Cardiac septum (tissue), 1 donor: ENCODE measurements at regions of chr4 and their contacts with region 1.

Region 1: GRCh38 chr4:150078637-150079581 is 664 bp downstream of the DCLK2 start:
- DNase-seq: peak; percentile 79

Region 2: GRCh38 chr4:149754526-149754925 is 324.4 kb before region 1 on chr4:
- intact Hi-C with region 1: no loop called
- DNase-seq: no peak

Region 3: DNA sequence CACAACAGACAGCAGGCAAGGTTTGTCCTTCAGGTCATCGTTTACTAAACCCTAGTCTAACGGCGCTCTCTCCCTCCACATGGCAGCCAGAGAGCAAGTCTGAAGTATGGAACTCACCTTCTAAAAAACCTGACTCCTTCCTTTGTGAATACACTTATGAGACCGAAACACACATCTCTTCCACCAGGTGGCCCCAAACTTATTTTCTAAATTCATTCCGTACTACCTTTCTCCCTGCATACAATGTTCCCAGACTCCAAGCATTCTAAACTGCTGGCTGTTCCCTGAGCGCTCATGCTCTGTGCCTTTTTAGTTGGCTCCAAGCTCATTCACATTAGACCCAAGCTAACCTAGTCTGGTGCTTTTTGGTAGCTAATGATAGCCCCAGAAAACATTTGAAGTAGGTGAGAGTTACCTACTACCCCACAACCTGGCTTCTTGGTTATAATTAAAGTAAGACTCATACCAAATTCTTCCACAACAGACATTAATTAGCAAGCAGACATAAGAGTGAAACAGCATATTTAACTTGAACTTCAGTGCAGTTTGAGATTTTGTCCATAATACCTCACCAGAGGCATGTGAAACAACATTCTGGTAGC is 68.3 kb before region 1 on chr4:
- intact Hi-C with region 1: loop called (anchors 5 kb)
- DNase-seq: no peak

Region 4: GRCh38 chr4:150119492-150119891 is 40.6 kb after region 1 on chr4:
- intact Hi-C with region 1: loop called (anchors 5 kb)
- DNase-seq: no peak

Region 5: DNA sequence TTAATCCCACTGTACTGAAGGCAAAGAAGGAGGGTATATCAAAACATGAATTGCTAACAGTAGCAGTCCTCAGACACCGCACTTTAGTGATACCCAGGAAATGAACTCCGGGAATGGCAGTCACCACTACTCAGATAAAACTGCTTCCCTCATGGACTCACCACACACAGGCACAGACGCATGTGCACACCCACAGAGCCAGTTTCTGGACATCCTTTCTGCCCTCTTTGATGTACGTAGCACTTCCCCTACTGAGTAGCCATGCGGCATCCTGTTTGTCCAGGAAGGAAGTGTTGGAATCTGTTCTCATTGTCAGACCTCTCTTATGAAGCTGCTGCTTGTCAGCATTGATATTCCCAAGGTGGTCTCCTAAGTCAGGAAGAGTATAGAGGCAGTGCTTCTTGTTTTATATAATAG is 95.1 kb after region 1 on chr4:
- intact Hi-C with region 1: loop called (anchors 5 kb)
- DNase-seq: no peak

Region 6: GRCh38 chr4:150209140-150209829 is 130.4 kb after region 1 on chr4:
- intact Hi-C with region 1: loop called (anchors 5 kb)
- DNase-seq: no peak

Region 7: GRCh38 chr4:150232029-150232428 is 153.1 kb after region 1 on chr4:
- intact Hi-C with region 1: loop called (anchors 5 kb)
- DNase-seq: no peak

Region 8: DNA sequence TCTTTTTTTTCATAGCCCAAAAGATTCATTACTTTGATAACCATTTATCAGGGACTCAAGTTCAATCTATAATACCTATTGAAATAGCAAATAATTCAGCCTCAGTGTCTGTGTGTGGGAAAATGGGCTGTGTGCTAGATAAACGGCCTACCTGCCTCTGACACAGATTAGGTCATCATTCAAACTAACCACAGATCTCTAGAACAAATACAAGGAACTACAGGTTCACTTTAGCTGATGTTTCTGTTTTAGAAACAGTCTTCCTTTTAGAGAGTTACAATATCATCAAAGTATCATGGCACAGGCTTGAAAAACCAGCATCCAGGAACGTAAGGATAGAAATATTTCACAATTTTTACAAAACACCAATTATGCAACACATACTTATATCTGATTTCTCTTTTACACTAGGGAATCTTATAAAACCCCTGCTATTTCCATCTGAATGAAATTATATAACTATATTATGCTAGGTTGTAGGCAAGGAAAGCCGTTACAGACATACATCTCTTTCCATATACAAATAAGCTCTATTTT is 446.5 kb after region 1 on chr4:
- intact Hi-C with region 1: no loop called
- DNase-seq: no peak